ENCODE measurements at regions of chr5 and their contacts with region 1.

Region 1: GRCh38 chr5:90866333-90866732 is 307.7 kb downstream of the ADGRV1 start:
- DNase-seq: peak; percentile 54
- H3K4me3 ChIP-seq: no peak overlapping the region
- H3K27ac ChIP-seq: no peak overlapping the region
- H3K4me1 ChIP-seq: peaks cover 13% of the 10 kb centered on the region
- H3K27me3 ChIP-seq: peaks cover 15% of the 10 kb centered on the region; the same call in 1 of the 2 replicates

Region 2: GRCh38 chr5:91388362-91388761 is 522.0 kb after region 1 on chr5:
- in situ Hi-C with region 1: no loop called
- DNase-seq: no peak
- H3K4me3 ChIP-seq: no peak overlapping the region
- H3K27ac ChIP-seq: no peak overlapping the region
- H3K4me1 ChIP-seq: peaks cover 10% of the 10 kb centered on the region
- H3K27me3 ChIP-seq: no peaks in the 10 kb centered on the region

Region 3: GRCh38 chr5:91419571-91420537 is 553.5 kb after region 1 on chr5:
- in situ Hi-C with region 1: loop called (anchors 25 kb)
- DNase-seq: peak; percentile 63
- H3K4me3 ChIP-seq: no peak overlapping the region
- H3K27ac ChIP-seq: no peak overlapping the region
- H3K4me1 ChIP-seq: no peaks in the 10 kb centered on the region
- H3K27me3 ChIP-seq: no peaks in the 10 kb centered on the region

Measured in GM23248 (cell line).